Activated T-helper 1 cell treated with anti-CD3 and anti-CD28 coated beads, Interleukin-12 subunit alpha, Interleukin-12 subunit beta, Interleukin-2, Interleukin-4 antibody, amounts not matched to agents 30 ng/mL and 10 ng/mL and 1 ng/mL, durations not matched to agents 14 hours and 24 hours and 36 hours (primary cell): ENCODE measurements at regions of chr7 and their contacts with region 1.

Region 1: GRCh38 chr7:100101016-100101862 is at the starts of genes AP4M1 and MCM7:
- DNase-seq: peak; percentile 98
- H3K4me3 Mint-ChIP-seq: peak within 1 kb of the TSS; percentile 94
- H3K27ac Mint-ChIP-seq: peak within 1 kb of the TSS; percentile 97
- H3K4me1 Mint-ChIP-seq: peaks cover 39% of the 10 kb centered on the region
- H3K27me3 Mint-ChIP-seq: no peaks in the 10 kb centered on the region
- total RNA-seq, gene AP4M1: 12.3 and 15.9 TPM in 2 replicates
- total RNA-seq, gene MCM7: 447 and 452 TPM in 2 replicates

Region 2: DNA sequence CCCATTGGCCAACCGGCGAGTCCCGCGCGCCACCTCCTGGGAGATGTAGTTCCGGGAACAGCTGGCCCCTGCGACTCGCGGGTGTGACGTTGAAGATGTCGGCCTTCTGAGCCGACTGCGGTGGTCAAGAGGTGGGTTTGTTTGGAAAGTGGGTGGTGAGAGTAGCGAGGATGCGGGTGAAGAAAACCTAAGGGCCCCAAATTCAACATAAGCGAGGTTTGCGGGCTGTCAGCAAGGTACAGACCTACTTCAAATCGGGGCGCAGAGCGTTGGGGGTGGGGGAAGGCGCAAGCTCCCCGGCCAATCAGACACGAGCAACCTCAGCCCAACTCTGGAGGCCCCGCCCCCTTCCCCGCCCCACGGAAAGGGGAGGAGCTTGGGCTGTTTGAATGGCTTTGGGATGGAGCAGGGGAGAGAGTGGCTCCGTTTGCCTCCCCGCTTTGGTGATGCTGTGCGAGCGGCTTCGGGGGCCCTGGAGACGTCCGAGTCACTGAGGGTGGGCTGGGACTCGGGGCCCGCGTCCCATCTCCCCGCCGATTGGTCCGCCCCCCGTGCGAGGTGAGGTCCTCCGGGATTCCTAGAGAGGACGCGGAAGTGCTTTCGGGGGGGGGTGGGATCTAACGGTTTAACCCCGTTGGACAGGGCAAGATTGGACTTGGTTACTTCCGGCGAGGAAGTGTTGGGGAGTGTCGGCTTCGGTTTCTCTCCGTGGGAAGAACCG is 596.5 kb before region 1 on chr7 and contains the start of gene ZKSCAN5:
- intact Hi-C with region 1: loop called (anchors 1 kb)
- DNase-seq: peak; percentile 96
- H3K4me3 Mint-ChIP-seq: peak within 1 kb of the TSS; percentile 90
- H3K27ac Mint-ChIP-seq: peak within 1 kb of the TSS; percentile 96
- H3K4me1 Mint-ChIP-seq: peaks cover 19% of the 10 kb centered on the region
- H3K27me3 Mint-ChIP-seq: no peaks in the 10 kb centered on the region
- total RNA-seq, gene ZKSCAN5: 8.0 and 8.1 TPM in 2 replicates

Region 3: GRCh38 chr7:100081535-100082102 is 19.6 kb before region 1 on chr7 and contains the start of gene ZNF3:
- intact Hi-C with region 1: loop called (anchors 1 kb)
- DNase-seq: peak; percentile 98
- H3K4me3 Mint-ChIP-seq: peak within 1 kb of the TSS; percentile 89
- H3K27ac Mint-ChIP-seq: peak within 1 kb of the TSS; percentile 92
- H3K4me1 Mint-ChIP-seq: peaks cover 31% of the 10 kb centered on the region
- H3K27me3 Mint-ChIP-seq: peaks cover 4% of the 10 kb centered on the region
- total RNA-seq, gene ZNF3: 24.6 and 26.1 TPM in 2 replicates

Region 4: GRCh38 chr7:100126931-100127865 is 26.0 kb after region 1 on chr7 and contains the start of gene MBLAC1:
- intact Hi-C with region 1: loop called (anchors 1 kb)
- DNase-seq: peak; percentile 85
- H3K4me3 Mint-ChIP-seq: peak within 1 kb of the TSS; percentile 94
- H3K27ac Mint-ChIP-seq: peak within 1 kb of the TSS; percentile 95
- H3K4me1 Mint-ChIP-seq: peaks cover 20% of the 10 kb centered on the region
- H3K27me3 Mint-ChIP-seq: no peaks in the 10 kb centered on the region
- total RNA-seq, gene MBLAC1: 4.1 and 5.5 TPM in 2 replicates

Region 5: GRCh38 chr7:100157334-100158228 is 56.3 kb after region 1 on chr7:
- intact Hi-C with region 1: no loop called
- DNase-seq: no peak
- H3K4me3 Mint-ChIP-seq: peak overlapping the region; percentile 81
- H3K27ac Mint-ChIP-seq: peak overlapping the region; percentile 67
- H3K4me1 Mint-ChIP-seq: peaks cover 43% of the 10 kb centered on the region
- H3K27me3 Mint-ChIP-seq: no peaks in the 10 kb centered on the region

Region 6: DNA sequence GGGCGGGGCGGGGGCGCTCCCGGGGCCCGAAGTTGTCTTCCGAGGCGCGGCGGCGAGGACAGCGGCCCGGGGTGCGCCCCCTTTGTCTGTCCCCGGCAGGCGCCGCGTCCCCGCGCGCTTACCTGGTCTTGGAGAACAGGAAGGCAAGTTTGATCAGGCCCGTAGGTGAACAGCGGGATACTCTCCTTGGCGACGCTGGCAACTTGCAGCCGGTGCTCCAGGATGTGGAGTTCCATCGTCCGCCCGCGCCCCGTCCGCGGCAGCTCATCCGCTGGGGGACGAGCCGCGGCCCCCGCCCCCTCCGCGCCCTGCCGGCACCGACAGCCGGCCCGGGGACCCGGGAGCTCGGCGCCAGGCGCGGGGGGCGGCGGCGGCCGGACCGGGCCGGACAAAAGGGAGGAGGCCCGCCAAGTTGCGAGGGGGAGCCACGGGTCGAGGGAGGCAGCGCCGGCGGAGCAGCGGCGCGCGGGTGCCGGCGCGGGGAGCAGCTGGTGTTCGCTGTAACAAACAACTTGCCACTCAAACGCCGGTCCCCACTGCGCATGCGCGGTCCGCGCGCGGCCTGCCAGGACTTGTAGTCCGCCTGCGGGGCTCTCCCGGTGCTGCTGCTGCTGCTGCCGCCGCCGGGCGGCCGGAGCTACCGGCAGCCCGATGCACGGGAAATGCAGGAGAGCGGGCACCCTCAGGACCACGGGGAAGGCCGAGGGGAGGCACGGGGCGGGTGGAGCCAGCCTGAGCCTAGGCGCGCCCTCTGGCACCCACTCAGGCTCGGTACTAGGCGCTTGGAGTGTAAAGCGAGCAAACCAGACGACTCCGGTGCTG is 170.7 kb after region 1 on chr7:
- intact Hi-C with region 1: loop called (anchors 1 kb)
- DNase-seq: peak; percentile 98
- H3K4me3 Mint-ChIP-seq: peak overlapping the region; percentile 77
- H3K27ac Mint-ChIP-seq: peak overlapping the region; percentile 55
- H3K4me1 Mint-ChIP-seq: peaks cover 14% of the 10 kb centered on the region
- H3K27me3 Mint-ChIP-seq: peaks cover 2% of the 10 kb centered on the region

Region 7: GRCh38 chr7:100705753-100706671 is 604.8 kb after region 1 on chr7 and contains the start of gene POP7:
- intact Hi-C with region 1: loop called (anchors 1 kb)
- DNase-seq: peak; percentile 99
- H3K4me3 Mint-ChIP-seq: peak within 1 kb of the TSS; percentile 98
- H3K27ac Mint-ChIP-seq: peak within 1 kb of the TSS; percentile 98
- H3K4me1 Mint-ChIP-seq: peaks cover 7% of the 10 kb centered on the region
- H3K27me3 Mint-ChIP-seq: peaks cover 13% of the 10 kb centered on the region
- total RNA-seq, gene POP7: 82.7 and 84.4 TPM in 2 replicates